Calu3 (cell line): ENCODE measurements at regions of chr18 and their contacts with region 1.

Region 1: DNA sequence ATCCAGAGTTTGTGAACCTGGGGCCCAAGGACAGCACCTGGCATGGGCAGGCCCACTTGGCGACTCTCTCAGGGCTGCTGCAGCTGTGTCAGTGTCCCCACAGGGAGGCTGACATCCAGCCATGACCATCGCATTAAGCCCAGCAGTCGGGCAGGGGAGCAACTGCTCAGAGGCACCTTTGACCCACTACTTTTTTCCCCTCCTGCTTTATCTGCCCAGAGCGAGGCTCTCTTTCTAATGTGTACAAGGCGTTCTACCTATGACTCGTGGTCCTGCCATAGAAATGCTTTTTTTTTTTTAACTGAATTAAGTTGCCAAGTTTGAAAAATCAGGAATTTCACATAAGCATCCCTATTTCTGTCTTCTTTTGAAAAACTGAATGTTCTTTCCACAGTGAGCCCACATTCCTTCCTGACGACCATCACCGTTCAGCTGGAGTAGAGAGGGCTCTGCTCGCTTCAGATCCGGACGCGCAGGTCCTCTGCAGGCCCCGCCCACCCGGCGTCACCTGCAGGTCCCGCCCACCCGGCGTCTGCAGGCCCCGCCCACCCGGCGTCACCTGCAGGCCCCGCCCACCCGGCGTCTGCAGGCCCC is 403 bp upstream of the CLUL1 start:
- DNase-seq: peak; percentile 6
- H3K4me3 Mint-ChIP-seq: peak overlapping the region; percentile 73
- H3K27ac Mint-ChIP-seq: no peak overlapping the region
- H3K4me1 Mint-ChIP-seq: no peaks in the 10 kb centered on the region
- H3K27me3 Mint-ChIP-seq: peaks cover 55% of the 10 kb centered on the region
- CTCF ChIP-seq: no peak

Region 2: GRCh38 chr18:499551-500408 is 96.6 kb before region 1 on chr18:
- CTCF ChIA-PET with region 1: no interaction called
- intact Hi-C with region 1: loop called (anchors 10 kb)
- DNase-seq: no peak
- H3K4me3 Mint-ChIP-seq: peak overlapping the region; percentile 52
- H3K27ac Mint-ChIP-seq: no peak overlapping the region
- H3K4me1 Mint-ChIP-seq: peaks cover 5% of the 10 kb centered on the region
- H3K27me3 Mint-ChIP-seq: peaks cover 35% of the 10 kb centered on the region
- CTCF ChIP-seq: no peak

Region 3: DNA sequence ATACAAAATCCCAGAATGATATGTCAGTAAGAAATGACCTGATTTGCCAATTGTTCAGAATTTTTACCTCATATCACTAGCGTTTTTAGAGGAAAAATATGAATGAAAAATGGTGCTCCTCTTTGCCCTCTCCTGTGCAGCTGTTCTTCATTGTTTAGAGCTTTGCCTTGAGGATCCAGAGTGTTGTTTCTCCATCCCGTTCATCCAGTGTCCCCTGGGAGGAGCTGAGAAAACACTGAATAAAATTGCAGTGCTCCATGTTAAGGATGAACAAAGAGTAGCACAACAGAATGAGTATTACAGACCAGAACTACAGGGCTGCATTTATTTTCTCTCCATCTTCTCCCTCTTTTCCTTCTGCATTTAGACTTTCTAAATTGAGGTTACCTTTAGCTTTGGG is 441.4 kb after region 1 on chr18:
- CTCF ChIA-PET with region 1: no interaction called
- intact Hi-C with region 1: no loop called
- DNase-seq: no peak
- H3K4me3 Mint-ChIP-seq: no peak overlapping the region
- H3K27ac Mint-ChIP-seq: no peak overlapping the region
- H3K4me1 Mint-ChIP-seq: no peaks in the 10 kb centered on the region
- H3K27me3 Mint-ChIP-seq: peaks cover 17% of the 10 kb centered on the region
- CTCF ChIP-seq: no peak